ENCODE measurements at regions of chr6 and their contacts with region 1.

Region 1: DNA sequence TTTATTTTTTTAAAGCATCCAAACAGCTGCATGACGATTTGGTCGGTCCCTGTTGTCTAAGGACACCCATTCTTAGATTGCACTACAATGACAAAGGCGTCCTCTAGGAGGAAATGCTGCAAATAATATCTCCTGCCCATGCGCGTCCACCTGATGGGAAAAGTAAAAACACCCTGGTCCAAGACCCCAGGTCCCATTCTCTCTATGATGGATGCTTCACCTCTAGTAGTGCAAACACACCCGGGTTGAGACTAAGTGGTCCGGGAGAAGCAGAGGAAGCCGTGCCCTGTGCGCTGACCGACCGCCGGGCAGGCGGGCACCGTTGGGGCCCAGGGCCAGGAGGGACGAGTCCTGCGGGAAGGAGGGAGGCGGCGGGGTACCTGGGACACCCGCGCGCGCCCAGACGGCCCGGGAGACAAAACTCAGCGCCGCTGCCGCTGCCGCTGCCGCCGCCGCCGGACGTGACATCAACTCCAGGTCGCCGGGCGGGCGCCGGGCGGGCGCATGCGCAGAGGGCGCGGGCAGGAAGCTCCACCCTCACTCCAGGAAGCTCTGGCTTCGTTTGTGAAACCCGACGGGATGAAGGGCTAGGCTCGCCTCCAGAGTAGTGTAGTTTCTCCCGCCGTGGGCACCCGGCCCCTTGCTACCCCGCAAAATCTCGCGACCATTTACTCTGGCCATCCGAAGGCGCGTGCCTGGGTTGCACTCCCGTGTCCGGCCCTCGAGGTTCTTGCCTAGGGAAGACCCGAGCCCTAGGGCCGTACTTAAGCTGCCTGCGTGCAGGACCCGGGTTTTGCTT is at the start of gene TBC1D7:
- DNase-seq: peak; percentile 57
- H3K4me3 ChIP-seq: peak within 1 kb of the TSS; percentile 95
- H3K27me3 ChIP-seq: no peaks in the 10 kb centered on the region
- CTCF ChIP-seq: peak; percentile 26; the same call in 1 of the 2 replicates
- polyA plus RNA-seq, gene TBC1D7: 18.6 and 20.2 TPM in 2 replicates

Region 2: GRCh38 chr6:12911387-12911960 is 416.8 kb before region 1 on chr6:
- CTCF ChIA-PET with region 1: interaction called, 147 read pairs
- POLR2A ChIA-PET with region 1: no interaction called
- DNase-seq: peak; percentile 10
- H3K4me3 ChIP-seq: no peak overlapping the region
- H3K27me3 ChIP-seq: peaks cover 2% of the 10 kb centered on the region; the same call in 1 of the 2 replicates
- CTCF ChIP-seq: peak; percentile 59

Region 3: GRCh38 chr6:13194852-13195251 is 133.4 kb before region 1 on chr6:
- CTCF ChIA-PET with region 1: interaction called, 87 read pairs
- POLR2A ChIA-PET with region 1: no interaction called
- DNase-seq: no peak
- H3K4me3 ChIP-seq: no peak overlapping the region
- H3K27me3 ChIP-seq: no peaks in the 10 kb centered on the region
- CTCF ChIP-seq: peak; percentile 71

Region 4: GRCh38 chr6:13470238-13471140 is 142.2 kb after region 1 on chr6:
- CTCF ChIA-PET with region 1: no interaction called
- POLR2A ChIA-PET with region 1: no interaction called
- DNase-seq: no peak
- H3K4me3 ChIP-seq: no peak overlapping the region
- H3K27me3 ChIP-seq: no peaks in the 10 kb centered on the region
- CTCF ChIP-seq: no peak

Region 5: DNA sequence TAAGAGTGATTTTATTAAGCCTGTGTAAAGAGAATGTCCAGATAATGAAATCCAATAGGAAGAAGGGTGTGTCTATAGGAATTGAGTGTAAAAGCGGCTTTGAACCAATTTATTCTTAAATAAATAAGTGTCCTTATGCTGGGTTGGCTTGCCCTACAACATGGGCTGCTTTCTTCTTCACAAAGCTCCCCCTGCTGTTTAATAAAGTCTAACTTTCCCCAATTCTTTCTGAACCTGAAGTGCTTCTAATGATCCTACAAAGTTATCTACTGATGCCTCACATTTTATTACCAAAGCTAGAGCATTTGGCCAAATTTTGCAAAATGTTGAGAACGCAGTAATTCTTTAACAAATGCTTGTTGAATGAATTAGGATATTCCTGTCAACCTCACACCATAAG is 209.8 kb after region 1 on chr6:
- CTCF ChIA-PET with region 1: interaction called, 13 read pairs
- POLR2A ChIA-PET with region 1: no interaction called
- DNase-seq: no peak
- H3K4me3 ChIP-seq: no peak overlapping the region
- H3K27me3 ChIP-seq: 0 out of 2 replicates have a peak, but pooled peaks cover 2% of the 10 kb centered on the region
- CTCF ChIP-seq: peak; percentile 47

Measured in BJ (cell line).